SK-N-SH (cell line): ENCODE measurements at regions of chr6 and their contacts with region 1.

Region 1: GRCh38 chr6:152954443-152954842 is 28.4 kb downstream of the FBXO5 start:
- DNase-seq: no peak
- H3K4me3 ChIP-seq: no peak overlapping the region
- H3K27ac ChIP-seq: no peak overlapping the region
- H3K4me1 ChIP-seq: peaks cover 0 to 13% of the 10 kb centered on the region in 2 experiments; a peak in 1 of 4 replicates
- H3K27me3 ChIP-seq: no peaks in the 10 kb centered on the region
- CTCF ChIP-seq: no peak
- EP300 ChIP-seq: no peak
- RAD21 ChIP-seq: peak; percentile 37

Region 2: GRCh38 chr6:152976749-152977148 is 22.3 kb after region 1 on chr6:
- CTCF ChIA-PET with region 1: interaction called, 10 read pairs
- POLR2A ChIA-PET with region 1: no interaction called
- DNase-seq: no peak
- H3K4me3 ChIP-seq: no peak overlapping the region
- H3K27ac ChIP-seq: peak overlapping the region in 1 of 2 experiments; percentile 17; a peak in 1 of 4 replicates
- H3K4me1 ChIP-seq: peaks cover 19 to 24% of the 10 kb centered on the region in 2 experiments; a peak in 3 of 4 replicates
- H3K27me3 ChIP-seq: no peaks in the 10 kb centered on the region
- CTCF ChIP-seq: no peak
- EP300 ChIP-seq: no peak
- RAD21 ChIP-seq: no peak

Region 3: DNA sequence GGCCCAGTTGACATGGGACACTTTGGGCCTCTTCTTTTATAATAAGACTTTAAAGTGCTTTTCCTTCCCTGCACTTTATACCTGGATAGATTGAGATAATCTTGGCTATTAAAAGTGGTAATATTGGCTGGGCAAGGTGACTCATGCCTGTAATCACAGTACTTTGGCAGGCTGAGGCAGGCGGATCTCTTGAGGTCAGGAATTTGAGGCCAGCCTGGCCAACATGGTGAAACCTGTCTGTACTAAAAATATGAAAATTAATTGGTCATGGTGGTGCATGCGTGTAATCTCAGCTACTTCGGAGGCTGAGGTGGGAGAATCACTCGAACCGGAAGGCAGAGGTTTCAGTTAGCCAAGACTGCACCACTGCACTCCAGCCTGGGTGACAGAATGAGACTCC is 373.7 kb after region 1 on chr6:
- CTCF ChIA-PET with region 1: no interaction called
- POLR2A ChIA-PET with region 1: no interaction called
- DNase-seq: no peak
- H3K4me3 ChIP-seq: no peak overlapping the region
- H3K27ac ChIP-seq: no peak overlapping the region
- H3K4me1 ChIP-seq: no peaks in the 10 kb centered on the region
- H3K27me3 ChIP-seq: no peaks in the 10 kb centered on the region
- CTCF ChIP-seq: no peak
- EP300 ChIP-seq: no peak
- RAD21 ChIP-seq: no peak